GM12878 (cell line): ENCODE measurements at regions of chr3 and their contacts with region 1.

Region 1: GRCh38 chr3:136390574-136390973 is 140.4 kb downstream of the PCCB start:
- DNase-seq: no peak
- ATAC-seq: no peak
- H3K4me3 ChIP-seq: no peak overlapping the region
- H3K27ac ChIP-seq: no peak overlapping the region
- H3K4me1 ChIP-seq: peaks cover 5% of the 10 kb centered on the region; the same call in 1 of the 2 replicates
- H3K27me3 ChIP-seq: no peaks in the 10 kb centered on the region
- CTCF ChIP-seq: no peak
- EP300 ChIP-seq: no peak
- POLR2A ChIP-seq: no peak
- RAD21 ChIP-seq: no peak

Region 2: DNA sequence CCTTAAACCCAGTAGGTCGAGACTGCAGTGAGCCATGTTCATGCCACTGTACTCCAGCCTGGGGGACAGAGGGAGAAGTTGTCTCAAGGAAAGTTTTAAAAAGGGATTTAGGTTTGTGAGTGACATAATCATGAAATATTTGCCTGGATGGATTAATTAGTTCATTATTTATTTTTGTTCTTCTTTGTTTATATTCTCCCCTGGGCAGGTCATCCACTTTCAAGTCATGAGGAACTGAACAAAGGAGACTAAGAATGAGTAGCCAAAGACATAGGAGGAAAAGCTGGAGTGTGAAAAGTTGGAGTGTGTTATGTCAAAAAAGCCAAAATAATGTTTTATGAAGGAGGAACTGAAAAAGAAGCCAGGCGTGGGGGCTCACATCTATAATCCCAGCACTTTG is 158.2 kb before region 1 on chr3:
- CTCF ChIA-PET with region 1: no interaction called
- POLR2A ChIA-PET with region 1: no interaction called
- RAD21 ChIA-PET with region 1: no interaction called
- SMC1A ChIA-PET with region 1: no interaction called
- in situ Hi-C with region 1: no loop called
- intact Hi-C with region 1: no loop called
- DNase-seq: no peak
- ATAC-seq: no peak
- H3K4me3 ChIP-seq: no peak overlapping the region
- H3K27ac ChIP-seq: no peak overlapping the region
- H3K4me1 ChIP-seq: no peaks in the 10 kb centered on the region
- H3K27me3 ChIP-seq: no peaks in the 10 kb centered on the region; a peak in 1 of 4 replicates
- CTCF ChIP-seq: no peak
- EP300 ChIP-seq: no peak
- POLR2A ChIP-seq: no peak
- RAD21 ChIP-seq: no peak

Region 3: DNA sequence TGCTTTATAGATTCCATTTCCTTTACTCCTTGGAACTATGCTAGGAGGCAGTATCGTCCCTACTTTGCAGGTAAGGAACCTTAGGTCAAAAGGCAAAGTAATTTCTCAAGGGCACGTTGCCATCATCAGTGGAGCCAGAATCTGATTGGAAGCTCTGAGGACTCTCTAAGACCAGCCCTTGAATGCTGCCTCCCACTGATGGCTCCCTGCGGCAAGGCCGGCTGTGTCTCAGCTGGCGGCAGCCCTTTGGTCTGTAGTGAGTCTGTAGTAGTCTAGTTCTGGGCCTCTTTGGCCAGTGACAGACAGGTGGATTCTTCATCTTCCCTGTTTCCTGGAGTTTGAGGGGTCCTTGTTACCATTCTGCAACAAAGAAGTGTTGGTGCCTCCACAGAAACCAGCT is 64.3 kb before region 1 on chr3:
- CTCF ChIA-PET with region 1: no interaction called
- POLR2A ChIA-PET with region 1: no interaction called
- RAD21 ChIA-PET with region 1: no interaction called
- SMC1A ChIA-PET with region 1: no interaction called
- in situ Hi-C with region 1: no loop called
- intact Hi-C with region 1: no loop called
- DNase-seq: no peak
- ATAC-seq: no peak
- H3K4me3 ChIP-seq: no peak overlapping the region
- H3K27ac ChIP-seq: no peak overlapping the region
- H3K4me1 ChIP-seq: no peaks in the 10 kb centered on the region
- H3K27me3 ChIP-seq: no peaks in the 10 kb centered on the region
- CTCF ChIP-seq: no peak
- EP300 ChIP-seq: no peak
- POLR2A ChIP-seq: no peak
- RAD21 ChIP-seq: no peak

Region 4: GRCh38 chr3:136350132-136350531 is 40.4 kb before region 1 on chr3:
- CTCF ChIA-PET with region 1: interaction called, 13 read pairs
- POLR2A ChIA-PET with region 1: no interaction called
- RAD21 ChIA-PET with region 1: no interaction called
- SMC1A ChIA-PET with region 1: no interaction called
- in situ Hi-C with region 1: no loop called
- intact Hi-C with region 1: no loop called
- DNase-seq: no peak
- ATAC-seq: no peak
- H3K4me3 ChIP-seq: no peak overlapping the region
- H3K27ac ChIP-seq: no peak overlapping the region
- H3K4me1 ChIP-seq: peaks cover 6% of the 10 kb centered on the region; the same call in 1 of the 2 replicates
- H3K27me3 ChIP-seq: no peaks in the 10 kb centered on the region
- CTCF ChIP-seq: no peak
- EP300 ChIP-seq: no peak
- POLR2A ChIP-seq: no peak
- RAD21 ChIP-seq: no peak

Region 5: GRCh38 chr3:136366289-136366688 is 24.3 kb before region 1 on chr3:
- CTCF ChIA-PET with region 1: interaction called, 14 read pairs
- POLR2A ChIA-PET with region 1: no interaction called
- RAD21 ChIA-PET with region 1: interaction called, 4 read pairs
- SMC1A ChIA-PET with region 1: interaction called, 6 read pairs
- in situ Hi-C with region 1: no loop called
- intact Hi-C with region 1: no loop called
- DNase-seq: no peak
- ATAC-seq: no peak
- H3K4me3 ChIP-seq: no peak overlapping the region
- H3K27ac ChIP-seq: no peak overlapping the region
- H3K4me1 ChIP-seq: no peaks in the 10 kb centered on the region
- H3K27me3 ChIP-seq: no peaks in the 10 kb centered on the region
- CTCF ChIP-seq: no peak
- EP300 ChIP-seq: no peak
- POLR2A ChIP-seq: no peak
- RAD21 ChIP-seq: no peak

Region 6: GRCh38 chr3:136404056-136404455 is 13.5 kb after region 1 on chr3:
- CTCF ChIA-PET with region 1: interaction called, 17 read pairs
- POLR2A ChIA-PET with region 1: no interaction called
- RAD21 ChIA-PET with region 1: no interaction called
- SMC1A ChIA-PET with region 1: interaction called, 3 read pairs
- in situ Hi-C with region 1: no loop called
- intact Hi-C with region 1: no loop called
- DNase-seq: no peak
- ATAC-seq: no peak
- H3K4me3 ChIP-seq: no peak overlapping the region
- H3K27ac ChIP-seq: no peak overlapping the region
- H3K4me1 ChIP-seq: no peaks in the 10 kb centered on the region
- H3K27me3 ChIP-seq: no peaks in the 10 kb centered on the region
- CTCF ChIP-seq: no peak
- EP300 ChIP-seq: no peak
- POLR2A ChIP-seq: no peak
- RAD21 ChIP-seq: no peak

Region 7: DNA sequence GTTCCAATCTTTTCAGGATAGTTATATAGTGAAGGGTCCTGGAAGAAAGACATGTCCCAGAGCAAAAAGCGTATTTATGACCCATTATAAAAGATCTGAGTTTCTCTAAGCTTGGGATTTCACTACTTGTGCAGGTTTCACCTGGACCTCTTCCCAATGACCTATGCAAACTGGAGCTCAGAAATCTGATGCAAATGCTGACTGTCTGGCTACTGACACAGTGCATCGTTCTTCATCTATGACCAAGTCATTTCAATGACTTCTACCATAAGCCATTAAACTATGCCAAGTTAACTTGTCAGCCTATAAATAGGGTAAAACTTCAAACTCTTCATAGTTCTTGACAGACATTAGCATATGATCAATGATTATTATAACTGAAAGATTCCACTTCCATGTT is 350.5 kb after region 1 on chr3:
- CTCF ChIA-PET with region 1: interaction called, 16 read pairs
- POLR2A ChIA-PET with region 1: no interaction called
- RAD21 ChIA-PET with region 1: interaction called, 4 read pairs
- SMC1A ChIA-PET with region 1: interaction called, 10 read pairs
- in situ Hi-C with region 1: no loop called
- intact Hi-C with region 1: no loop called
- DNase-seq: no peak
- ATAC-seq: no peak; the same call in 2 of the 3 replicates
- H3K4me3 ChIP-seq: no peak overlapping the region
- H3K27ac ChIP-seq: no peak overlapping the region
- H3K4me1 ChIP-seq: no peaks in the 10 kb centered on the region; the same call in 1 of the 2 replicates
- H3K27me3 ChIP-seq: no peaks in the 10 kb centered on the region
- CTCF ChIP-seq: no peak
- EP300 ChIP-seq: no peak
- POLR2A ChIP-seq: no peak
- RAD21 ChIP-seq: no peak